Posterior vena cava (tissue), 2 donors: ENCODE measurements at regions of chr2 and their contacts with region 1.

Region 1: DNA sequence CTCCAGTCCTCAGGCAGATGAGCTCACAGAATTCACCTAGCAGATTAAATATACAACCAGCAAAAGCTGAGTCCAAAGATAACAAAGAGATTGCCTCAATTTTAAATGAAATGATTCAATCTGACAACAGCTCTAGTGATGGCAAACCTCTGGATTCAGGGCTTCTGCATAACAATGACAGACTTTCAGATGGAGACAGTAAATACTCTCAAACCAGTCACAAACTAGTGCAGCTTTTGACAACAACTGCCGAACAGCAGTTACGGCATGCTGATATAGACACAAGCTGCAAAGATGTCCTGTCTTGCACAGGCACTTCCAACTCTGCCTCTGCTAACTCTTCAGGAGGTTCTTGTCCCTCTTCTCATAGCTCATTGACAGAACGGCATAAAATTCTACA is 86.0 kb downstream of the PTRHD1 start:
- DNase-seq: no peak

Region 2: DNA sequence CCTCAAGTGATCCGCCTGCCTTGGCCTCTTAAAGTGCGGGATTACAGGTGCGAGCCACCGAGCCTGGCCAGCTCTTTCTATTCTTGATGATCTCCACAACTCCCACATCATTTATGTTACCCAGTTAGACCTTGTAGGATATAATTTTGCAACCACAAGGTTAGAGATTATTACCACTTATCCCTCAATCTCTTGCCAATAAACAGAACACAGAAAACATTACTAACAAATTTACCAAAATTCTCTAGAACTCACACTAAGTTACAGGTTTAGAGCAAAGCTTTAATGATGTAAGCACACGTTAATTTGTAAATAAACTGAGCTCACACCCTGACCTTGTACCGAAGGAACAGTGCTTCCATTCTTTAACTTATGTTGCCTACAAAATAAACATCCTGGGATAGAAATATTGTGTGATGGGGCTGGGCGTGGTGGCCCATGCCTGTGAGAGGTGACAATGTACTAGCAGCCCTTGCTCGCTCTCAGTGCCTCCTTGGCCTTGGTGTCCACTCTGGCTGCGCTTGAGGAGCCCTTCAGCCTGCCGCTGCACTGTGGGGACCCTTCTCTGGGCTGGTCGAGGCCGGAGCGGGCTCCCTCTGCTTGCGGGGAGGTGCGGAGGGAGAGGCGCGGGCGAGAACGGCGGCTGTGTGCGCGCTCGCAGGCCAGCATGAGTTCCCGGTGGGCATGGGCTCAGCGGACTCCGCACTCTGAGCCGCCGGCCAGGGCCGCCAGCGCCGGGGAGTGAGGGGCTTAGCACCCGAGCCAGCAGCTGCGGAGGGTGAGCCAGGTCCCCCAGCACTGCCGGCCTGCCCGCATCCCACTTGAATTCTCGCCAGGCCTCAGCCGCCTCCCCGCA is 304.7 kb before region 1 on chr2:
- intact Hi-C with region 1: no loop called
- DNase-seq: no peak

Region 3: GRCh38 chr2:24724111-24724775 is 17.1 kb after region 1 on chr2:
- intact Hi-C with region 1: loop called in 1 of 2 experiments (anchors 2 kb)
- DNase-seq: no peak